Naive thymus-derived CD8-positive, alpha-beta T cell (primary cell): ENCODE measurements at regions of chr9 and their contacts with region 1.

Region 1: GRCh38 chr9:19184144-19184917 is 46.2 kb upstream of the DENND4C start:
- DNase-seq: peak; percentile 38 to 90 (median 72)
- ATAC-seq: peak; percentile 99 to 100
- H3K4me3 Mint-ChIP-seq: peak overlapping the region; percentile 26 to 86 (median 73)
- H3K27ac Mint-ChIP-seq: peak overlapping the region; percentile 95 to 98 (median 96)
- H3K4me1 Mint-ChIP-seq: peaks cover 3 to 42% (median 20%) of the 10 kb centered on the region in 4 donors
- H3K27me3 Mint-ChIP-seq: no peaks in the 10 kb centered on the region

Region 2: GRCh38 chr9:19127881-19128500 is 56.3 kb before region 1 on chr9:
- POLR2A ChIA-PET with region 1: interaction called, 19 read pairs
- DNase-seq: peak in 8 of 10 donors; percentile 12 to 48 (median 28)
- ATAC-seq: peak; percentile 31 to 43
- H3K4me3 Mint-ChIP-seq: peak overlapping the region; percentile 76 to 97 (median 92)
- H3K27ac Mint-ChIP-seq: peak overlapping the region; percentile 86 to 97 (median 93)
- H3K4me1 Mint-ChIP-seq: peaks cover 13 to 65% (median 56%) of the 10 kb centered on the region in 4 donors
- H3K27me3 Mint-ChIP-seq: no peaks in the 10 kb centered on the region

Region 3: GRCh38 chr9:19201899-19202891 is 17.9 kb after region 1 on chr9:
- POLR2A ChIA-PET with region 1: no interaction called
- DNase-seq: no peak
- ATAC-seq: no peak
- H3K4me3 Mint-ChIP-seq: no peak overlapping the region
- H3K27ac Mint-ChIP-seq: peak overlapping the region in 1 of 10 donors; percentile 27
- H3K4me1 Mint-ChIP-seq: no peaks in the 10 kb centered on the region
- H3K27me3 Mint-ChIP-seq: no peaks in the 10 kb centered on the region

Region 4: GRCh38 chr9:19230356-19231125 is 46.2 kb after region 1 on chr9 and contains the start of gene DENND4C:
- POLR2A ChIA-PET with region 1: interaction called, 66 read pairs
- DNase-seq: peak; percentile 69 to 90 (median 81)
- ATAC-seq: peak; percentile 84 to 86
- H3K4me3 Mint-ChIP-seq: peak within 1 kb of the TSS in 6 of 10 donors; percentile 77 to 89 (median 84)
- H3K27ac Mint-ChIP-seq: peak within 1 kb of the TSS in 9 of 10 donors; percentile 64 to 94 (median 91)
- H3K4me1 Mint-ChIP-seq: peaks cover 2 to 24% (median 19%) of the 10 kb centered on the region in 4 donors
- H3K27me3 Mint-ChIP-seq: no peaks in the 10 kb centered on the region
- polyA plus RNA-seq, gene DENND4C: 31.0 to 40.2 (median 35.1) TPM

Region 5: GRCh38 chr9:19379697-19380046 is 195.3 kb after region 1 on chr9:
- POLR2A ChIA-PET with region 1: interaction called, 16 read pairs
- DNase-seq: peak in 4 of 10 donors; percentile 41 to 71 (median 44)
- ATAC-seq: peak; percentile 53 to 57
- H3K4me3 Mint-ChIP-seq: peak overlapping the region; percentile 93 to 99 (median 97)
- H3K27ac Mint-ChIP-seq: peak overlapping the region; percentile 97 to 99 (median 99)
- H3K4me1 Mint-ChIP-seq: peaks cover 23 to 56% (median 41%) of the 10 kb centered on the region in 4 donors
- H3K27me3 Mint-ChIP-seq: no peaks in the 10 kb centered on the region